Activated T-helper 1 cell treated with anti-CD3 and anti-CD28 coated beads, Interleukin-12 subunit alpha, Interleukin-12 subunit beta, Interleukin-2, Interleukin-4 antibody, amounts not matched to agents 30 ng/mL and 10 ng/mL and 1 ng/mL, durations not matched to agents 14 hours and 24 hours and 36 hours (primary cell): ENCODE measurements at regions of chr1 and their contacts with region 1.

Region 1: DNA sequence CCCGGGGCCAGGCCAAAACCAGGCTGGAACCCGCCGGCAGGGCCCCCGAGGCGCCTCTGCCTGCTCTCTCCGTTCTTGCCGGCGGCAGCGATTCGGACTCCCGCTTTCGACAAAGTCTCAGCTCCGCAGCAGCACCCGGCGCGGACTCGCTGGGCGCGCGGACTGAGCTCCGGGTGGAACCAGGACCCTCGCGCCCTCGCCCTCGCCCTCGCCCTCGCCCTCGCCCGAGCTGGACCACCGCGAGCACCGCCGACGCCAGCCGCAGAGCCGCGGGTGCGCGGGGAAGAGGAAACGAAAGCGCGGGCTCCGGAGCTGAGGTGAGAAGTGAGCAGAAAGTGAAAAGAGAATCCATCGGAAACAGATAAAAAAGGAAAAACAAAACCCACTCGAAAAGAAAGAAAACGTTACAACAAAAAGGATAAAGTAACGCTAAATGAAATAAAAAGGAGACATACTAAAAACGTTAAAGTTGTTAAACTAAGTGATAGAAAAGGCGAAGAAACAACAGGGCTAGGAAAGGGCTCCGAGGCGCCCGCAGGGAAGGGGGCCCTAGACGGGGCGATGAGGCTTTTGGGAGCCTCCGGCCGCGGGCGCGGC is 64.9 kb downstream of the MEF2D start:
- DNase-seq: no peak
- H3K4me3 Mint-ChIP-seq: peak overlapping the region; percentile 76
- H3K27ac Mint-ChIP-seq: peak overlapping the region; percentile 65
- H3K4me1 Mint-ChIP-seq: peaks cover 44% of the 10 kb centered on the region
- H3K27me3 Mint-ChIP-seq: peaks cover 77% of the 10 kb centered on the region

Region 2: GRCh38 chr1:156421062-156421938 is 14.3 kb before region 1 on chr1:
- intact Hi-C with region 1: loop called (anchors 1 kb)
- DNase-seq: peak; percentile 53
- H3K4me3 Mint-ChIP-seq: peak overlapping the region; percentile 84
- H3K27ac Mint-ChIP-seq: no peak overlapping the region
- H3K4me1 Mint-ChIP-seq: peaks cover 11% of the 10 kb centered on the region
- H3K27me3 Mint-ChIP-seq: peaks cover 89% of the 10 kb centered on the region

Region 3: GRCh38 chr1:156677616-156678596 is 242.3 kb after region 1 on chr1:
- intact Hi-C with region 1: loop called (anchors 5 kb)
- DNase-seq: no peak
- H3K4me3 Mint-ChIP-seq: no peak overlapping the region
- H3K27ac Mint-ChIP-seq: no peak overlapping the region
- H3K4me1 Mint-ChIP-seq: peaks cover 14% of the 10 kb centered on the region
- H3K27me3 Mint-ChIP-seq: peaks cover 63% of the 10 kb centered on the region